ENCODE measurements at regions of chr11 and their contacts with region 1.

Region 1: GRCh38 chr11:9137293-9138132 is 46.1 kb upstream of the SCUBE2 start:
- DNase-seq: peak; percentile 59 to 84 (median 73)
- H3K4me3 ChIP-seq: no peak overlapping the region
- H3K27ac ChIP-seq: peak overlapping the region in 1 of 2 donors; percentile 23
- H3K4me1 ChIP-seq: no peaks in the 10 kb centered on the region
- H3K27me3 ChIP-seq: no peaks in the 10 kb centered on the region
- CTCF ChIP-seq: peak; percentile 72 to 83 (median 78)
- EP300 ChIP-seq: no peak
- POLR2A ChIP-seq: no peak

Region 2: GRCh38 chr11:8225589-8226036 is 911.9 kb before region 1 on chr11:
- intact Hi-C with region 1: loop called in 1 of 4 experiments (anchors 10 kb)
- DNase-seq: peak; percentile 67 to 88 (median 80)
- H3K4me3 ChIP-seq: no peak overlapping the region
- H3K27ac ChIP-seq: no peak overlapping the region
- H3K4me1 ChIP-seq: no peaks in the 10 kb centered on the region
- H3K27me3 ChIP-seq: no peaks in the 10 kb centered on the region
- CTCF ChIP-seq: peak; percentile 91 to 93 (median 91)
- EP300 ChIP-seq: no peak
- POLR2A ChIP-seq: no peak

Region 3: DNA sequence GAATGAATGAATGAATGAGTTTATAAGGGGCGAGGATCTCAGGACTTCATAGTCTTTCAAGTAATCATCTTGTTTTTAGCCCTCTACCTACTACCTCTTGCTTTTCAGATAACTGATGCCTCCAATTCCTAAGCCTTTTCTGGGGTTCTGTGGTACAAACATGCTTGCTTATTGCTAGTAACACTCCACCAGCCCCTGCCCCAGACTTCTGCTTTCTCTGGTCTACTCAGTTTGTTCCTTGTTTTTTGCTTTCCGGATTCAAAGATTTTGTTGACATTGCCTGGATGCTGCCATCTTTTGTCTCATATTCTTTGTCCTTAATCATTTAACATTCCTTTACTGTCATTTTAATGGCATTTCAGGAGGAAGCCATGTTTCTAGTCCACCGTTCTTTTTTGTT is 164.4 kb before region 1 on chr11:
- intact Hi-C with region 1: loop called in 1 of 4 experiments (anchors 5 kb)
- DNase-seq: no peak
- H3K4me3 ChIP-seq: no peak overlapping the region
- H3K27ac ChIP-seq: no peak overlapping the region
- H3K4me1 ChIP-seq: no peaks in the 10 kb centered on the region
- H3K27me3 ChIP-seq: no peaks in the 10 kb centered on the region
- CTCF ChIP-seq: no peak
- EP300 ChIP-seq: no peak
- POLR2A ChIP-seq: no peak

Region 4: GRCh38 chr11:9015677-9016076 is 121.8 kb before region 1 on chr11:
- intact Hi-C with region 1: loop called in 2 of 4 experiments (anchors 1 to 5 kb)
- DNase-seq: peak; percentile 35 to 60 (median 51)
- H3K4me3 ChIP-seq: no peak overlapping the region
- H3K27ac ChIP-seq: no peak overlapping the region
- H3K4me1 ChIP-seq: no peaks in the 10 kb centered on the region
- H3K27me3 ChIP-seq: no peaks in the 10 kb centered on the region
- CTCF ChIP-seq: peak; percentile 39 to 57 (median 56)
- EP300 ChIP-seq: no peak
- POLR2A ChIP-seq: no peak

Measured in ovary (tissue), 10 donors.